ENCODE measurements at regions of chr20 and their contacts with region 1.

Region 1: GRCh38 chr20:50460460-50461267 is 49.5 kb upstream of the PTPN1 start:
- DNase-seq: peak; percentile 81
- CTCF ChIP-seq: peak; percentile 97

Region 2: DNA sequence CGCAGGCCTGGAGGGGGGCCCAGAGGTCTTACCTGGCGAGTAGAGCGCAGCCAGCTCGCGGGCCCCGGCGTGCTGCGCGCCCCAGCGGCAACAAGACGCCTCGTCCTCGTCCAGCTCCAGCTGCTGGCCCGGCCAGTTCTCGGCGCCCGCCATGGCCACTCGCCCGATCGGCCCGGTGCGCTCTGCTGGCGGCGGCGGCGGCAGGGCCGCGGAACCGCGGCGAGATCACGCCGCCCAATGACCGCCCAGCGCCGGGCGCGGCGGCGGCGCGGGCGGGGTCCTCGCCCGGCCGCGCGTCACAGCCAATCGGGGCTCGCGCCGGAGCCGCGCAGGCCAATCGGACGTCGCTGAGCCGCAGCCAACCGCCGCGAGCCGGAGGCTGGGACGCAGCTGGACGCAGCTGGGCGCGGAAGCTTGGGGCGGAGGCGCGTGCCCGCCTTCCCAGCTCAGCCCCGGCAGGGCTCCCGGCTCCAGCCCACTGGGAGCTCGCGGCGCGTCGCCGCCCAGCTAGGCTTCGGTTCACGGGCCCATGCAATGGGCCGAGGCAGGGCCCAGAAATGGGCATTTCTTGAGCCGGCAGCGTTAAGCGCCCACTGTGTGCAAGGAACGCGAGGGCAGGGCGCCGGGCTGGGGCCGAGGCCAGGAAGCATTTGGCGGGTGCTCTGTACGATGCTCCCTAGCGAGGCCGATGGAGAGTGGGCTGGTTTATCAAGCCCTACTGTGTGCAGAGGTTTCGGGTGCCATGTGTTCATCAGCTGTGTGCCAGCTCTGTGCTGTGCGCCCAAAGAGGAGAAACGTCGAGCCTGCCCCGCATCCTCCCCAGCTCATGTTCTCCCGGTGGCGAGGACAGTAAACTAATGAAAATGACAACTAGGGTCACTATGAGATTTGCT is 306.9 kb before region 1 on chr20 and contains the start of gene PEDS1:
- CTCF ChIA-PET with region 1: interaction called, 11 read pairs
- POLR2A ChIA-PET with region 1: no interaction called
- DNase-seq: peak; percentile 99
- CTCF ChIP-seq: no peak

Region 3: DNA sequence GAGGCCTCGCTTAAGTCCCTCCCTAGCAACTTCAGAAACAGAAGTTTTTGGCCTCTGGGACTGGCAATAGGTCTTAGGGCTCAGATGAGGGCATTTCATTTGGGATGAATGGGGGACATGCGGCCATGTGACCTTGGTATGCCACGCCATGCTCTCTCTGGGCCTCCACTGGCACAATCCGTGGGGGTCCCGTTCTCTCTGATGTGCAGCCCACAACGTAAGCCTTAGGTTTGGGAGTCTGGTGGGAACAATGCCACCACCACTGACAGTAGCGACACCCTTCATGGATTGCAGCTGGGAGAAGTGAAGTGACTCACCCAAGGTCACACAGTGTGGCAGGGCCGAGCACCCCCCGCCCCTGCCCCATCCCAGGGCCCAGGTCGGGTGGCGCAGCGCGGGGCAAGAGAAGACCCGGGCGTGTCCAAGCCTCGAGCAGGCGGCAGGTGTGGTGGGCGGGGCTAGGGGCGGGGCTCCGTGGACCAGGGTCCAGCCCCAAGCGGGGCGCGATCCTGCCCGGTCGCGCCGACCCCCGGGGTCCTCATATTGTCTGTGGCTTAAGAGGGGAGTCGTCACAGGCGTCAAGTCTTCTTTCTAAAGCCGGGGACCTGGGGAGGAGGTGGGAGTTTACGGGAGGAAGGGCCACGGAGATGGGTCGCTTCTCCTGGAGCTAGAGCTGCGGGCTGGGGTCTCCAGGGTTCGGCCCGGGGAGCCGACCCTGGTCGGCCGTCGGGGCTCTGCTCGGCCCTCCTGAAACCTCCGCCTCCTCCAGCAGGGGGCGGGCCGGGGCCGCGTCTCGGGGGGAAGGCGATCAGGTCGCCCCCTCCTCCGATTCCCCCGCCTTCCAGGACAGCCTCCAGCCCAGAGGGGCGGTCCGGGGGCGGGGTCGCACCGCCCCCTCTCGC is 270.7 kb before region 1 on chr20:
- CTCF ChIA-PET with region 1: interaction called, 243 read pairs
- POLR2A ChIA-PET with region 1: no interaction called
- DNase-seq: peak; percentile 91
- CTCF ChIP-seq: peak; percentile 56

Region 4: GRCh38 chr20:50472693-50473664 is 12.3 kb after region 1 on chr20:
- CTCF ChIA-PET with region 1: interaction called, 12 read pairs
- POLR2A ChIA-PET with region 1: no interaction called
- DNase-seq: no peak
- CTCF ChIP-seq: no peak

Region 5: DNA sequence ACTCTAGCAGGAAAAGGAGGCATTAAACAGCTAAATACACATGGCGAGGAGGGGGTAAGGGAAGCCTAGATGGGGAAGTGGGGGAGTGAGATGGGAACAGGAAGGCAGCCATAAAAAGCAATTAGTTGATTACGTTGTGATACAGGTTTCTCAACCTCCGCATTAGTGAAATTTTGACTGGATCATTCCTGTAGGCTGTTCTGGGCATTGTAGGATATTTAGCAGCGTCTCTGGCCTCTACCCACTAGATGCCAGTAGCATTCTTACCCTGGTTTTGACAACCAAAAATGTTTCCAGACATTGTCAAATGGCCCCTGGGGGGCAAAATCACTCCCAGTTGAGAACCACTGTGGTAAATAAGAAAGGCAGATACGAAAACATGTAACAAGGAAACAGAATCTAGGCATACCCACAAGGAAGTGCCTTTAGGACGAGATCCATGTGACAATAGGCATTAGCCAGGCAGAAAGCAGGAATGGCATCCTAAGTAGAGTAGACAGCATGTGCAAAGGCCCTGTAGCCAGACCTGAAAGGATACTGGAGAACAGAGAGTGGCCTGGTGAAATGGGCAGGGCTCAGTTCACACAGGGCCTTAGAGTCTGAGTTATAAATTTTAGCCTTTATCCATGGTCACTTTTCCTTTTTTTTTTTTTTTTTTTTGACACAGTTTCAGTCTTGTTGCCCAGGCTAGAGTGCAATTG is 23.8 kb after region 1 on chr20:
- CTCF ChIA-PET with region 1: interaction called, 15 read pairs
- POLR2A ChIA-PET with region 1: no interaction called
- DNase-seq: no peak
- CTCF ChIP-seq: no peak

Region 6: GRCh38 chr20:50575847-50576720 is 115.4 kb after region 1 on chr20:
- CTCF ChIA-PET with region 1: interaction called, 22 read pairs
- POLR2A ChIA-PET with region 1: no interaction called
- DNase-seq: peak; percentile 65
- CTCF ChIP-seq: peak; percentile 69